ENCODE measurements at regions of chr2 and their contacts with region 1.

Region 1: GRCh38 chr2:54728669-54729120 is 5.2 kb downstream of the EML6 start:
- DNase-seq: peak; percentile 95
- ATAC-seq: peak; percentile 83
- H3K4me3 ChIP-seq: no peak overlapping the region; the same call in 1 of the 2 replicates
- H3K27ac ChIP-seq: peak overlapping the region; percentile 69
- H3K4me1 ChIP-seq: peaks cover 28% of the 10 kb centered on the region
- H3K27me3 ChIP-seq: no peaks in the 10 kb centered on the region
- CTCF ChIP-seq: peak; percentile 63

Region 2: GRCh38 chr2:54254180-54254579 is 474.5 kb before region 1 on chr2:
- CTCF ChIA-PET with region 1: no interaction called
- POLR2A ChIA-PET with region 1: no interaction called
- intact Hi-C with region 1: no loop called
- DNase-seq: no peak
- ATAC-seq: no peak
- H3K4me3 ChIP-seq: no peak overlapping the region
- H3K27ac ChIP-seq: no peak overlapping the region
- H3K4me1 ChIP-seq: no peaks in the 10 kb centered on the region
- H3K27me3 ChIP-seq: no peaks in the 10 kb centered on the region
- CTCF ChIP-seq: no peak

Region 3: GRCh38 chr2:54589340-54590215 is 139.1 kb before region 1 on chr2:
- CTCF ChIA-PET with region 1: no interaction called
- POLR2A ChIA-PET with region 1: no interaction called
- intact Hi-C with region 1: no loop called
- DNase-seq: peak; percentile 67
- ATAC-seq: peak; percentile 58
- H3K4me3 ChIP-seq: peak overlapping the region; percentile 33; the same call in 1 of the 2 replicates
- H3K27ac ChIP-seq: peak overlapping the region; percentile 87
- H3K4me1 ChIP-seq: peaks cover 58% of the 10 kb centered on the region
- H3K27me3 ChIP-seq: no peaks in the 10 kb centered on the region
- CTCF ChIP-seq: no peak

Region 4: DNA sequence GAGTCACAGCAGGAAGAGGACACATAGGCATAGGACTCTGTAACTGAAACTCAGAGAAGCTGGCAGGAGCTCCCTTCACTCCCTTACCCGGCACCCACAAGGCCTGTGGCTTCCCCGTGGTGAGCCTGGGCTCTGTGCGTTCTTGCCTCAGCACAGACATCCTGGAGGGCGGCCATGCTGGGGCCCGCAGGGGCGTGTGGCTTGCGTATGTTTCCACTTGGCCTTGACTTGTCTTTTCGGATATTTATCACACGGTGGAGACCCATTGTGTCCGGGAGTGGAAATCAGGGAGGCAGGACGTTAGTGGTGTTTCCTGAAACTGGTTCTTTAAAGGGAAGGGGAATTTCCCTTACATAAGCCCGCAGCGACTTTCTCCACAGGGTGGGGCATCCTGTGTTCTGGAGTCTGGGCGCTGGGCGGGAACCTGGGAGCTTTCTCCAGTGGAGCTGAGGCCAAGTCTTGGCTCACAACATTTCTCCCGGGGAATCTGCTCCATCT is 55.1 kb before region 1 on chr2:
- CTCF ChIA-PET with region 1: no interaction called
- POLR2A ChIA-PET with region 1: interaction called, 10 read pairs
- intact Hi-C with region 1: no loop called
- DNase-seq: no peak
- ATAC-seq: peak; percentile 25; the same call in 1 of the 2 replicates
- H3K4me3 ChIP-seq: no peak overlapping the region
- H3K27ac ChIP-seq: no peak overlapping the region
- H3K4me1 ChIP-seq: peaks cover 13% of the 10 kb centered on the region
- H3K27me3 ChIP-seq: no peaks in the 10 kb centered on the region
- CTCF ChIP-seq: no peak

Region 5: GRCh38 chr2:54755641-54756326 is 27.1 kb after region 1 on chr2:
- CTCF ChIA-PET with region 1: interaction called, 7 read pairs
- POLR2A ChIA-PET with region 1: no interaction called
- intact Hi-C with region 1: loop called (anchors 1 kb)
- DNase-seq: no peak
- ATAC-seq: no peak
- H3K4me3 ChIP-seq: no peak overlapping the region
- H3K27ac ChIP-seq: no peak overlapping the region
- H3K4me1 ChIP-seq: peaks cover 32% of the 10 kb centered on the region
- H3K27me3 ChIP-seq: no peaks in the 10 kb centered on the region
- CTCF ChIP-seq: no peak

Measured in PC-3 (cell line).